ENCODE measurements at regions of chr6 and their contacts with region 1.

Region 1: GRCh38 chr6:30752157-30752927 is 8.0 kb upstream of the IER3 start:
- DNase-seq: peak; percentile 99
- H3K4me3 ChIP-seq: no peak overlapping the region
- H3K27ac ChIP-seq: peak overlapping the region; percentile 99
- H3K27me3 ChIP-seq: no peaks in the 10 kb centered on the region
- CTCF ChIP-seq: 0 out of 2 replicates have a peak, but pooled peaks have one; percentile 13

Region 2: GRCh38 chr6:30769088-30769852 is 16.9 kb after region 1 on chr6:
- CTCF ChIA-PET with region 1: interaction called, 4 read pairs
- POLR2A ChIA-PET with region 1: interaction called, 19 read pairs
- DNase-seq: peak; percentile 86
- H3K4me3 ChIP-seq: peak overlapping the region; percentile 49
- H3K27ac ChIP-seq: peak overlapping the region; percentile 100
- H3K27me3 ChIP-seq: no peaks in the 10 kb centered on the region
- CTCF ChIP-seq: no peak

Region 3: DNA sequence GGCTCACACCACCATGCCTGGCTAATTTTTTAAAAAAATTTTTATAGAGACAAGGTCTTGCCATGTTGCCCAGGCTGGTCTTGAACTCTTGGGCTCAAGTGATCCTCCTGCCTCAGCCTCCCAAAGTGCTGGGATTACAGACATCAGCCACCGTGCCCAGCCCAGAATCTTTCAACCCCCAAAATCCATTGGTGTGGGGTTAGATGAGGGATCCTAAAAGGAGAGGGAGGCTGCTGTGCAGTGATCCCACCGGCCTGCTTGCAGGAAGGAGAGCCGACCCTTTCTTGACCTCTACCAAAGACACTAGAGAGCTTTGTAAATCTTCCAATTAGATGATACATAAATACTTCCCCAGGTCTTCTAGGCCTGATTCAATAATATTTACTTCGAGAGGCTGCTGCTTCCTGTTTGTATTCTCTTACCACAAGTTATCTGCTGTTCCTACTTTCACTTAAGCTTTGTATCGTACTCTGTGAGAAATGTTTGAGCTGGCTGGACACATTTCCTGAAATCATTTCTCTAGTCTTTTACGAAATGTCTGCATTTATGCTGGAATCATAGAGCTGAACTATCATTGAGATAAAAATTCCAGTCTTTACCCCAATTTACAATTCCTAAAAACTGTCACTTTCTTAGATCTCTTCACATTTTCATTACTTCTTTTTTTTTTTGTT is 41.3 kb after region 1 on chr6:
- CTCF ChIA-PET with region 1: no interaction called
- POLR2A ChIA-PET with region 1: interaction called, 10 read pairs
- DNase-seq: peak; percentile 59
- H3K4me3 ChIP-seq: no peak overlapping the region
- H3K27ac ChIP-seq: peak overlapping the region; percentile 84
- H3K27me3 ChIP-seq: no peaks in the 10 kb centered on the region
- CTCF ChIP-seq: no peak

Region 4: GRCh38 chr6:30821862-30822782 is 69.8 kb after region 1 on chr6:
- CTCF ChIA-PET with region 1: interaction called, 12 read pairs
- POLR2A ChIA-PET with region 1: interaction called, 6 read pairs
- DNase-seq: no peak
- H3K4me3 ChIP-seq: no peak overlapping the region
- H3K27ac ChIP-seq: peak overlapping the region; percentile 21
- H3K27me3 ChIP-seq: no peaks in the 10 kb centered on the region
- CTCF ChIP-seq: peak; percentile 58

Measured in AG04450 (cell line).